CD4-positive, alpha-beta T cell (primary cell): ENCODE measurements at regions of chr2 and their contacts with region 1.

Region 1: DNA sequence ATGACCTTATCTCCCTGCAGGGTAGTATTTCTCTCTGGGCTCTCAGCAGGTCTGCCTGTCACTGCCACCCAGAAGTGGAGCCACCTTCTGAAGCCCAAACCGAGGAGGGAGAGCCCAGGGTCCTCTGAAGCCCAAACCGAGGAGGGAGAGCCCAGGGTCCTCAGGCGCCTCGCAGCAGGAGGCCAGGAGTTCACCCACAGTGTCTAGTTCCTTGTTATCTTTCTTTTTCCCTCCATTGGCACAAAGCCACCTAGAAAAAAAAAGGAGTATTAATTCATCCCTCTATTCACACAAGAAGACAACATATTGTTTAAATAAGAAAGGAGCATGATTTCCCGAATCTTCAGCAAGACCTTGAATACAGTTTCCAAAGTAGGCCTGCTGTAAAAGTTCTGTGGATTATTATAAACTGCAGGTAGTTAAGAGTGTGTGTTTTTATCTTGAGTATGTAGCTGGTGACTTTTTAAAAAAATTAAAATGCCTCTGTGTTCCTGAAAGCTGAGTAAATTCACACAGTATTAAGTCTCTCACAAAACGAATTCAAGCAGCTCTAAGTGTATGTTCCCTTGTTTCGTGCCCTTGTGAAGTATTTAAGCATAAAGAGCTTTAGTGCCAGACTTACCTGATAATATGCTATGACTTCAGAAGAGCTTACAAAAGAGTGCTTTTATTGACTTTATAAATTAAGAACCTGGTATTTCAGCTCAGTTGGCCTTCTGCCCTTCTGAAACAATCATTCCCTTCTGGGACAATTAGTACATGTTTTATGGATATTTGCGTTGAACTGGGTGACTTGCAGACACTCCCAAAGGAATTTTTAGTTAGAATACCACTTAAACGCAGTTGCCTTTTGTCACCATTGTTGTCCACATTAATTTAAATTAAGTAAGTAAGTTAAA is 11.7 kb upstream of the GRHL1 start:
- DNase-seq: no peak
- ATAC-seq: no peak
- H3K4me3 ChIP-seq: no peak overlapping the region
- H3K4me3 Mint-ChIP-seq: no peak overlapping the region
- H3K27ac ChIP-seq: no peak overlapping the region
- H3K27ac Mint-ChIP-seq: no peak overlapping the region
- H3K4me1 ChIP-seq: no peaks in the 10 kb centered on the region
- H3K4me1 Mint-ChIP-seq: no peaks in the 10 kb centered on the region
- H3K27me3 ChIP-seq: peaks cover 0 to 6% of the 10 kb centered on the region in 2 experiments
- H3K27me3 Mint-ChIP-seq: peaks cover under 1% of the 10 kb centered on the region
- CTCF ChIP-seq: no peak

Region 2: GRCh38 chr2:10620481-10620880 is 680.6 kb after region 1 on chr2:
- CTCF ChIA-PET with region 1: no interaction called
- POLR2A ChIA-PET with region 1: no interaction called
- intact Hi-C with region 1: loop called in 1 of 2 experiments (anchors 5 kb)
- DNase-seq: peak in 3 of 14 experiments; percentile 35 to 71 (median 43)
- ATAC-seq: peak; percentile 79
- H3K4me3 ChIP-seq: no peak overlapping the region
- H3K4me3 Mint-ChIP-seq: no peak overlapping the region
- H3K27ac ChIP-seq: no peak overlapping the region
- H3K27ac Mint-ChIP-seq: no peak overlapping the region
- H3K4me1 ChIP-seq: peaks cover 12% of the 10 kb centered on the region
- H3K4me1 Mint-ChIP-seq: peaks cover 40% of the 10 kb centered on the region
- H3K27me3 ChIP-seq: no peaks in the 10 kb centered on the region
- H3K27me3 Mint-ChIP-seq: no peaks in the 10 kb centered on the region
- CTCF ChIP-seq: no peak